CD4-positive, alpha-beta memory T cell (primary cell): ENCODE measurements at regions of chr5 and their contacts with region 1.

Region 1: DNA sequence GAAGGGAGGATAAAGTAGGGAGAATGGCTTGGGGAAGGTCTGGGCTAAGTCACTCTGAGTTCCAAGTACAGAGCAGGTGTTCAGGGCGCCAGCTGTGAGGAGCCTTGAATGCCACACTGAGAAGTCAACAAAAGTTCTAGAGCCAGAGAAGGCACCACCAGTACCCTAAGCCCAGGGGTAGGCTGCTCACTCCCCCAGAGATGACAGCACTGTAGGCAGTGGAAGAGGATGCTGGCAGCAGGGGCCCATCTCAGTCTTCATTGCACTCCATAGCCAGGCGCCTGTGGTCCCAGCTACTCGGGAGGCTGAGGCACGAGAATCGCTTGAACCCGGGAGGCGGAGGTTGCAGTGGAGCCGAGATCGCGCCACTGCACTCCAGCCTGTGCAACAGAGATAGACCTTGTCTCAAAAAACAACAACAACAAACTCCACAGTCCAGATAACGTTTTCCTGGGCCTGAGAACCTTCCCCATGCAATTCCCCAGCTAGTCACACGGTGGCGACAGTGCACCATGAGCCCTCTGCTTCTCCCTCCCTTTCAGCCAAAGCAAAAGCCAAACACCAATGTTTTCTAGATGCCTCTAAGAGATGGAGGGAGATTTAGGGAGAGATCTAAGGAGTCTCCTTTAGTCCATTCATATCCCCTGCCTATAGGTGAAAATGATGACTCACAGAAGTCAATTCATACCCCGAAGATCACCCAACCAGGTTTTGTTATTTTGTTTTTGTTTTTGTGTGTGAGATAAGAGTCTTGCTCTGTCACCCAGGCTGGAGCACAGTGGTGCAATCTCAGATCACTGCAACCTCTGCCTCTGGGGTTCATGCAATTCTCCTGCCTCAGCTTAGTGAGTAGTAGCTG is 19.8 kb upstream of the NSD1 start:
- DNase-seq: peak; percentile 71 to 80 (median 76)
- H3K4me3 ChIP-seq: no peak overlapping the region
- H3K4me3 Mint-ChIP-seq: peak overlapping the region in 1 of 8 donors; percentile 24
- H3K27ac ChIP-seq: no peak overlapping the region
- H3K27ac Mint-ChIP-seq: peak overlapping the region in 2 of 7 donors; percentile 31 to 59
- H3K4me1 ChIP-seq: peaks cover 26% of the 10 kb centered on the region
- H3K4me1 Mint-ChIP-seq: peaks cover 11 to 28% (median 17%) of the 10 kb centered on the region in 4 donors
- H3K27me3 ChIP-seq: no peaks in the 10 kb centered on the region
- H3K27me3 Mint-ChIP-seq: no peaks in the 10 kb centered on the region

Region 2: GRCh38 chr5:177071666-177072385 is 42.0 kb before region 1 on chr5:
- CTCF ChIA-PET with region 1: interaction called, 93 read pairs
- POLR2A ChIA-PET with region 1: no interaction called
- intact Hi-C with region 1: loop called (anchors 1 kb)
- DNase-seq: peak; percentile 47 to 68 (median 58)
- H3K4me3 ChIP-seq: no peak overlapping the region
- H3K4me3 Mint-ChIP-seq: peak overlapping the region in 1 of 8 donors; percentile 27
- H3K27ac ChIP-seq: no peak overlapping the region
- H3K27ac Mint-ChIP-seq: peak overlapping the region in 4 of 7 donors; percentile 5 to 68 (median 30)
- H3K4me1 ChIP-seq: no peaks in the 10 kb centered on the region
- H3K4me1 Mint-ChIP-seq: peaks cover 4 to 5% (median 4%) of the 10 kb centered on the region in 4 donors
- H3K27me3 ChIP-seq: no peaks in the 10 kb centered on the region
- H3K27me3 Mint-ChIP-seq: no peaks in the 10 kb centered on the region

Region 3: DNA sequence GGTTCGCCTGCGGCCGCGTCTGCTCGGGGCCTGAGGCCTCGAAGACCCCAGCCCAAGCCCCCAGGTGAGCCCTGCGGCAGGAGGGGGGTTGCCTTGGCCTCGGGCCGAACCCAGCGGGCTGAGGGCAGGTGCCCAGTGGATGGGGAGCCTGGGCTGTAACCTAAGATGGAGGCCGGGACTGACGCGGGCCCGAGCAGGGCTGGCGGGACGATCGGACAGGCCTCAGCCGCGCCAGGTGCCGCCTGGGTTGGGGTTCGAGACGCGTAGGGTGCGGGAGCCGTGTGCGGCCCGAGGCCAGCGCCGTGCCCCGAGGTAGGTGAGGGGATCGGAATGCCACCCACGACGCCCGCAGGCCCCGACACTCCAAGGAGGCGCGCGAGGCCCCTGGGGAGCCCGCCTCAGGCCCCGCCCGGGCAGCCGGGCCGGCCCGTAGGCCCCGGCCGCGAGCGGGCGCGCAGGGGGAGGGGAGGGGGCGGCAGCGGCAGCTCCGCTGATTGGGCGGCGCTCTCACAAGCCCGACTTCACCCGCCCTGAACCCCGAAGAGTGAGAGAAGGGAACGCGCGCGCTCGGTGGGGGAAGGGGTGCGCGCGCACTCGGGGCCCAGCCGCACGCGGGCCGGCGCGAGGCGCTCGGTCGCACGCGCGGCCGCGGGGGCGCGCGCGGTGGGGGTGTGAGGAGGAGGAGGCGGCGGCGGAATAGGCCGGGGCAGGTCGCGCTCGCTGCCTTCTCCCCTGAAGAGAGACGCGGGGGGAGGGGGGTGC is 19.5 kb after region 1 on chr5 and contains the start of gene NSD1:
- CTCF ChIA-PET with region 1: interaction called, 80 read pairs
- POLR2A ChIA-PET with region 1: interaction called, 68 read pairs
- intact Hi-C with region 1: loop called (anchors 1 kb)
- DNase-seq: peak; percentile 90 to 93 (median 92)
- H3K4me3 ChIP-seq: peak within 1 kb of the TSS; percentile 20 to 67
- H3K4me3 Mint-ChIP-seq: peak within 1 kb of the TSS; percentile 85 to 90 (median 87)
- H3K27ac ChIP-seq: peak within 1 kb of the TSS; percentile 66
- H3K27ac Mint-ChIP-seq: peak within 1 kb of the TSS; percentile 82 to 94 (median 92)
- H3K4me1 ChIP-seq: peaks cover 63% of the 10 kb centered on the region
- H3K4me1 Mint-ChIP-seq: peaks cover 36 to 73% (median 52%) of the 10 kb centered on the region in 4 donors
- H3K27me3 ChIP-seq: no peaks in the 10 kb centered on the region
- H3K27me3 Mint-ChIP-seq: no peaks in the 10 kb centered on the region
- total RNA-seq, gene NSD1: 116 to 122 TPM

Region 4: DNA sequence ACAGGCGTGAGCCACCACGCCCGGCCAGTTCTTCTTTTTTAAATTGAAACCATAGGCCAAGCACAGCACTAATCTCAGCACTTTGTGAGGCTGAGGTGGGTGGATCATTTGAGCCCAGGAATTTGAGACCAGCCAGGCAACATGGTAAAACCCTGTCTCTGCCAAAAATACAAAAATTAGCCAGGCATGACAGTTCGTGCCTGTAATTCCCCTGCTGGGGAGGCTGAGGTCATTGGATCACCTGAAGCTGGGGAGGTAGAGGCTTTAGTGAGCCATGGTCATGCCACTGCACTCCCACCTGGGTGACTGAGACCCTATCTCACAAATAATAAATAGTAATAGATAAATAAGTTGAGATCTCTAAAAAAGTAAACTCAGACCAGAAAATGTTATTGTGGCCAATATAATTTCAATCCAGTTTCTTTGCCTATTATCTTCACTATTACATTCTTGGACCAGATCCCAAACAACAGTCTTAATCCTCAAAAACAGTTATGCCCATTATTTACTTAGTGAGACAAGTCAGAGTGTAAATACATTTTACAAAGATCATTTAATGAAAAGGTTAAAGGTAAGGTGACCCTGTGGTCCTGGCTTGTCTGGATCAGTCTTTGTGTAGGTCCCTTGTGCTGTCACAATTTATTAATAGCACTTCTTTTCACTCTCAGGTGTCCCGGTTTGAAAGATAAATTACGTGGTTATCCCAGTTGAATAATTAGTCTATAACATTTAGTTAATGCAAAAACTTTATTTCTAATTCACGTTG is 136.1 kb after region 1 on chr5:
- CTCF ChIA-PET with region 1: interaction called, 29 read pairs
- POLR2A ChIA-PET with region 1: no interaction called
- intact Hi-C with region 1: loop called (anchors 5 kb)
- DNase-seq: no peak
- H3K4me3 ChIP-seq: no peak overlapping the region
- H3K4me3 Mint-ChIP-seq: no peak overlapping the region
- H3K27ac ChIP-seq: no peak overlapping the region
- H3K27ac Mint-ChIP-seq: peak overlapping the region in 4 of 7 donors; percentile 18 to 51 (median 36)
- H3K4me1 ChIP-seq: no peaks in the 10 kb centered on the region
- H3K4me1 Mint-ChIP-seq: peaks cover 0 to 7% (median 4%) of the 10 kb centered on the region in 4 donors
- H3K27me3 ChIP-seq: no peaks in the 10 kb centered on the region
- H3K27me3 Mint-ChIP-seq: no peaks in the 10 kb centered on the region

Region 5: DNA sequence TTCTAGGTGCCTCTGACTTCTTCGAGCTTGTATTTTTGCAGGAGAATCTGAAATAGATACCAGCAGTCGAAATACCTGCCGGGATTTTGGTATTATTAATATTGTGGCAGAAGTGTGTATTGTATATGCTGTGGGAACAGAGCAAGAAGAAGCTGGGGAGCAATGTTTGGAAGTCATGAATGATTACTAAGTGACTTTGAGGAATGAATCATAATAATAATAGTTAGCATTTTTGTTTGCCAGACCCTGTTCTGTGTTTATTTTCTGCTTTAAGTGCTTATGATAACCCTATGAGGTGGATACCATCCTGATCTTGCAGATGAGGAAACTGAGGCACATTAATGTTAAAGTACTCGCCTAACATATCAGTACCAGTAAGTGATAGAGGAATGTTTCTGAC is 157.3 kb after region 1 on chr5:
- CTCF ChIA-PET with region 1: interaction called, 12 read pairs
- POLR2A ChIA-PET with region 1: no interaction called
- intact Hi-C with region 1: no loop called
- DNase-seq: no peak
- H3K4me3 ChIP-seq: no peak overlapping the region
- H3K4me3 Mint-ChIP-seq: no peak overlapping the region
- H3K27ac ChIP-seq: no peak overlapping the region
- H3K27ac Mint-ChIP-seq: peak overlapping the region in 1 of 7 donors; percentile 47
- H3K4me1 ChIP-seq: no peaks in the 10 kb centered on the region
- H3K4me1 Mint-ChIP-seq: peaks cover 0 to 4% (median 2%) of the 10 kb centered on the region in 4 donors
- H3K27me3 ChIP-seq: no peaks in the 10 kb centered on the region
- H3K27me3 Mint-ChIP-seq: no peaks in the 10 kb centered on the region

Region 6: GRCh38 chr5:177362610-177363507 is 249.1 kb after region 1 on chr5:
- CTCF ChIA-PET with region 1: no interaction called
- POLR2A ChIA-PET with region 1: no interaction called
- intact Hi-C with region 1: no loop called
- DNase-seq: peak; percentile 54 to 86 (median 61)
- H3K4me3 ChIP-seq: peak overlapping the region; percentile 11 to 52
- H3K4me3 Mint-ChIP-seq: peak overlapping the region; percentile 81 to 89 (median 85)
- H3K27ac ChIP-seq: peak overlapping the region; percentile 81
- H3K27ac Mint-ChIP-seq: peak overlapping the region; percentile 86 to 97 (median 92)
- H3K4me1 ChIP-seq: peaks cover 81% of the 10 kb centered on the region
- H3K4me1 Mint-ChIP-seq: peaks cover 40 to 76% (median 59%) of the 10 kb centered on the region in 4 donors
- H3K27me3 ChIP-seq: no peaks in the 10 kb centered on the region
- H3K27me3 Mint-ChIP-seq: no peaks in the 10 kb centered on the region

Region 7: DNA sequence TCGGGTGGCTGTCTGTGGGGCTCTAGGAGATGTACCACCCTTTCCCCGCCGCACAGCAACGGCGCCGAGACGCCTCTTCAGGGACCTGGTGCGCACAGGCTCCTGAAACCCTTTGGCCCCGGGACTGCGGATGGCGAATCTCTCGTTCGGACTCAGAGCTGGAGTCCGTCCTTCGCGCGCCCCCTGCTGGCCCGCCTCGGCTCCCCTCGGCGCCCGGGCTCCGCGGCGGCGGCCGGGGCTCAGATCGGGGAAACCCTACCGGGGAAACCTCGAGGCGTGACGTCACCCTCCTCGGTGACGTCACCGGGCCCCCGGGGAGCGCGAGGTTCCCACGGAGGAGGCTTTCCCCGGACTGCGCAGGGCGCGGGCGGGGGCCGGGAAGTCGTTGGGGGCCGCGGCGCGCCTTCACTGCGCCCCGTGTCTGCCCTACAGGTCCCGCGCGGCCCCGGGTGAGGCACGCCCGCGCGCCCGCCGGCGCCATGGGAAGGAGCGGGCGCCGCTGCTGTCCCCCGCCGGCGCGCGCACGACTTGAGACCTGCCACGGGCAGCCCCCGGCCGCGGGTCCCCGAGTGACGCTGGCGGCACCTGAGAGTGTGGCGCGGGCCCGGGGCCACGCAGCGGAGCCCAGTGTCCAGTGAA is 340.7 kb after region 1 on chr5:
- CTCF ChIA-PET with region 1: interaction called, 4 read pairs
- POLR2A ChIA-PET with region 1: no interaction called
- intact Hi-C with region 1: loop called (anchors 2 kb)
- DNase-seq: peak; percentile 88 to 94 (median 91)
- H3K4me3 ChIP-seq: peak overlapping the region in 1 of 2 donors; percentile 77
- H3K4me3 Mint-ChIP-seq: peak overlapping the region; percentile 31 to 89 (median 82)
- H3K27ac ChIP-seq: peak overlapping the region; percentile 96
- H3K27ac Mint-ChIP-seq: peak overlapping the region; percentile 76 to 97 (median 85)
- H3K4me1 ChIP-seq: peaks cover 16% of the 10 kb centered on the region
- H3K4me1 Mint-ChIP-seq: peaks cover 9 to 36% (median 23%) of the 10 kb centered on the region in 4 donors
- H3K27me3 ChIP-seq: no peaks in the 10 kb centered on the region
- H3K27me3 Mint-ChIP-seq: peaks cover 0 to 2% of the 10 kb centered on the region in 2 donors